Sigmoid colon (tissue), 7 donors: ENCODE measurements at regions of chr11 and their contacts with region 1.

Region 1: DNA sequence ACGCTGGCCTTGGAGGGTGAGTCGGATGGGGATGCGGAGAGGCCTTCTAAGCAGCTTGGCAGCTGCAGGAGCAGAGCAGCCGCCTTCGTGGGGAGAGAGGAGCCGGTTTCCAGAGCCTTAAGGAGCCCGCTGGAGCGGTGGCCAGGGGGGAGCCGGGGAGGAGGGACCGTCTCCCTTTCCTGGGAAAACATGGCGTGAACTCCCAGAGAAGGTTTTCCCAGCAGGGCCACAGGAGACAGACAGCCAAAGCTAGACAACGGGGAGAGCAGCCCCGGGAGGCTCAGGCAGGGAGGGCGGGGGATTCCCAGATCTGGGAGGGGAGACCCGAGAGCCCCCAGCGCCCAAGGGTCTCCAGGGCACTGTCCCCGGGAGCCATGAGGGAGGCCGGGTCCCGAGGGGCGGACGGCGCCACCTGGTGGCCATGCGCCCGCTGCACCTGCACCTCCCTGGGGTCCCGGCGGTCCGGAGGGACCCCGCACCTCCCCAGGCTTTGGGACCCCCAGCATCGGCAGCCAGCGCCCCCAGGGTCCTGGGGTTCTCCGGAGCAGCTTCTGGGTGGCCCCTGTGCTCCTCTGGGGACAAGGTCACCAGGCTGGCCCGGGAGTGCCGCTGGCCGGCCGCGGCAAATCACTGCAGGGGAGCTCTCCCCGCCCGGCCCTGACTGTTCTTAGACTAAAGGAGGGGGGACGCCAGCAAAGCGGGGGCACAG is 2.4 kb upstream of the SYT8 start:
- DNase-seq: no peak
- H3K4me3 ChIP-seq: peak overlapping the region in 2 of 4 donors; percentile 4 to 20
- H3K27ac ChIP-seq: no peak overlapping the region
- H3K4me1 ChIP-seq: peaks cover 0 to 13% (median 11%) of the 10 kb centered on the region in 4 donors
- H3K27me3 ChIP-seq: peaks cover 0 to 3% (median 0%) of the 10 kb centered on the region in 3 donors
- CTCF ChIP-seq: peak; percentile 91 to 99 (median 98)
- EP300 ChIP-seq: no peak
- POLR2A ChIP-seq: no peak

Region 2: DNA sequence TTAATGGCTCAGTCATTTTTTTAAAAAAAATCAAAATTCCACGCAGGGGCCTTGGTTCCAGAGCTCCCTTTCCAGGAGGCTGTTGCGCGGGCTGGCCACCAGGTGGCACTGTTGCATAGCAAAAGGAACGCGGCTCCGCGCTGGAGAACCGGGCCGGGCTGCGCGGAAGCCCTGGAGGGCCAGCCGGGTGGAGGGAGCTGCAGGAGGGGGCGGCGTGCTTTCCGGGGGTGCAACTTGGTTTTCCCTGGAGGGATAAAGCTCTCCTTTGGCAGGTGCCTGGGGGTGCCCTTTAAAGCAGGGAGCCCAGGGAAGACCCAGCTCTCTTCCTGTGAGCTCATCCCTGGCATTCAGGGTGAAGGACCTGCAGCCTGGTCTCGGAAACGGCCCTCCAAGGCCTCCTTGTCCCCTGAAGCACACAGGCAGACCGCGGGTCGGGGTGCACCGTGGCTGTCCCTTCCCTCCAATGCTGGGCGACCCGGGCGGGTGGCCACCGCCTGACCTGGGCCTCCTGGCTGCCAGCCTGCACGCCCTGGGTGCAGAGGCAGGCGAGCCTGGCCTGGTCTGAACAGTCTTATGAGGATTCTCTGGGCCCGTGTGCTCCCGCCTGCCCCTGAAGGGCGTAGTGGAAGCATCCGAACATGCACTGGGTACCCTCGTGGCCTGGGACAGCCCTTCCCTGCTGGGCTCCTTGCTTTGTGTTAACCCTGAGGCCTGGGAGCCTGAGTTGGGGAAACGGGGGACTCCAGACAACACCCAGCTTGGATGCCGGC is 179.4 kb before region 1 on chr11:
- intact Hi-C with region 1: loop called (anchors 1 kb)
- DNase-seq: peak; percentile 84
- H3K4me3 ChIP-seq: no peak overlapping the region
- H3K27ac ChIP-seq: no peak overlapping the region
- H3K4me1 ChIP-seq: peaks cover 0 to 5% (median 4%) of the 10 kb centered on the region in 4 donors
- H3K27me3 ChIP-seq: peaks cover 0 to 23% (median 0%) of the 10 kb centered on the region in 3 donors
- CTCF ChIP-seq: peak; percentile 89 to 97 (median 94)
- EP300 ChIP-seq: no peak
- POLR2A ChIP-seq: no peak

Region 3: DNA sequence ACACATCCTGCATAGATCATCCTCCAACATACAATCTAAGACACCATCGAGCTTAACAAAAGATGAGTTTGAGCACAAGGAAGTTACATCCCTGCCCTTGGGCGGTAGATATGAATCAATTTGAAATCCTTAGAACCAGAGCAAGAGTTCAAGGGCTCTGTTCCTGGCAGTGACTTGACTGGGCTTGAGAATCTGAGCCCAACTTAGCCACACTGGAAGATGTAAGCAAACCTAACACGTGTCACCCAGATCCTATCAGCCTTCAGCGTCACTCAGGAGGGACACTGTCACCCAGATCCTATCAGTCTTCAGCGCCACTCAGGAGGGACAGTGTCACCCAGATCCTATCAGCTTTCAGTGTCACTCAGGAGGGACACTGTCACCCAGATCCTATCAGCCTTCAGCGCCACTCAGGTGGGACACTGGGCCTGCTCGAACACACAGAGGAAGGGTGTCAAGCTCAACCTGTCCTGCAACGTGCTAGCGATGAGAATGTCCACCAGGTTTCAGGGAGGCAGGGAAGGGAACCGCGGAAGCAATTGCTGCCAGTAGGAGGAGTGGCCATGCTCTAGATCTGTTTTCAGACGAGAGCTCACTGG is 35.9 kb before region 1 on chr11:
- intact Hi-C with region 1: no loop called
- DNase-seq: no peak
- H3K4me3 ChIP-seq: no peak overlapping the region
- H3K27ac ChIP-seq: no peak overlapping the region
- H3K4me1 ChIP-seq: no peaks in the 10 kb centered on the region
- H3K27me3 ChIP-seq: peaks cover 0 to 24% (median 8%) of the 10 kb centered on the region in 3 donors
- CTCF ChIP-seq: no peak
- EP300 ChIP-seq: no peak
- POLR2A ChIP-seq: no peak